CD8-positive, alpha-beta T cell (primary cell): ENCODE measurements at regions of chr7 and their contacts with region 1.

Region 1: DNA sequence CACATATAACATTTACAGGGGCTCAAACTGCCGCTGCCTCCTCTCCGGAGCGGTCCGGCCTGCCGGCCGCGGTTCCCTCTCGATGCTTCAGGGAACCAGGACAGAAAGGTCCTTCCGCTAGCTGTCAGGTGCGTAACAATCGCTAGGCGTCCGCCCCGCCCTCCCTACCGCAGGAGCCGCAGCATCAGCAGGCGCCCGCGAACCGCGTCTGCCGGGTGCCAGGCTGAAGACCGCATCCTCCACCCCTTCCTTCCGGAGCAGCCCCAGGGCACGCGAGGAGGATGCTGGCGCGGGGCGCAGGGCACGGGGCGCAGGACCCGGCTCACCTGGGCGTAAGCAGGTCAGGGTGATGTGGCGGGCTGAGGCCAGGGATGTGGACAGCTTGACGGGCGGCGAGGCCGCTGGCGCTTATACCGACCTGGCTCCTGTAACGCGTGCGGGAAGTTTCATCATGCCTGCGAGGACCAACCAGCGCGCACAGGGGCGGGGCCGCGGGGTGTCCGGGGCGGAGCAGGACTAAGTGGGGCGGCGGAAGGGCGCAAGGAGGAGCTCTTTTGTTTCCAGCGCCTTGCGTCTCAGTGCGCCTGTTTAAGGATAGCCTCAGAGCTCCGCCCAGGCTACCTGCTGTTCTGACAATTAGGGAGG is at the start of gene ASNS:
- DNase-seq: peak; percentile 62 to 91 (median 78)
- ATAC-seq: peak; percentile 80
- H3K4me3 ChIP-seq: peak within 1 kb of the TSS; percentile 55 to 64
- H3K4me3 Mint-ChIP-seq: peak within 1 kb of the TSS; percentile 87
- H3K27ac ChIP-seq: peak within 1 kb of the TSS; percentile 58 to 75
- H3K27ac Mint-ChIP-seq: peak within 1 kb of the TSS; percentile 91
- H3K4me1 ChIP-seq: peaks cover 12% of the 10 kb centered on the region
- H3K4me1 Mint-ChIP-seq: peaks cover 13% of the 10 kb centered on the region
- H3K27me3 ChIP-seq: no peaks in the 10 kb centered on the region
- H3K27me3 Mint-ChIP-seq: no peaks in the 10 kb centered on the region
- CTCF ChIP-seq: no peak
- total RNA-seq, gene ASNS: 11.1 to 13.6 TPM

Region 2: DNA sequence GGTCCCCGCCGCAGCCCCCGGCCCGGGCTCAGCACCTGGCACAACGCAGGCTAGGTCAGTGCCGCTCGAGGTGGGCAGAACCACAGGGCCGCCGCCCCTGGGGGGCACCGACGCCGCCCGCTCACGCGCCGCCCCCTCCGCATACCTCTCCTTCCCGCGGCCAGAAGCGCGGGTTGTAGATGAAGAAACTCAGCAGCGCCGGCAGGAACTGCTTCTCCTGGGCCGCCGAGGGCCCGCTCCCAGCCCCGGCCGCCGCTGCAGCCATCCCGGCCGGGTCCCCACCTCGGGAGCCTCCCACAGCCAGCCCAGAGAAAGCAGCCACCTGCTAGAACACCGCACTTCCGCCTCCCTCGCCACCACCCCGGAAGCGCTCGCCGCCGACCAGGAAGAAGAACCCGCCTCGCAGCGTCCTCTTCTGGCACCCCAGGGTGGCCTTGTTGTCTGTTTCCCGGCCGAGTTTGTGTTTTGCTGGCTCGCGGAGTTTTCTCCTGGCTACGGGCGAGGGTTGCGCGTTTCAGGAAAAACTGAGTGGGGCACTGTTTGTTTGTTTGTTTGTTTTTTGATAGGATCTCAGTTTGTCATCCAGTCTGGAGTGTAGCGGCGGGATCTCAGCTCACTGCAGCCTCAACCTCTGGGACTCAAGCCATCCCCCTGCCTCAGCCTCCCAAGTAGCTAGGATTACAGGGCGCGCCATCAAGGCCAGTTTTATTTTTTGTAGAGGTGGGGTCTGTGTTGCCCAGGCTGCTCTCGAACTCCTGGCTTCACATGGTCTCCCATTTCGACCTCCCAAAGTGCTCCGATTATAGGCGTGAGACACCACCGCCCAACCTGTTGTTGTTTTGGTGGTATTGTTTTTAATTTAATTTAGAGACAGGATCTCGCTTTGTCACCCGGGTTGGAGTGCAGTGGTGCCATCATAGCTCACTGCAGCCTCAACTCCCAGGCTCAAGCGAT is 100.1 kb after region 1 on chr7:
- CTCF ChIA-PET with region 1: no interaction called
- POLR2A ChIA-PET with region 1: interaction called, 3 read pairs
- intact Hi-C with region 1: loop called in 1 of 2 experiments (anchors 2 kb)
- DNase-seq: peak; percentile 65 to 90 (median 84)
- ATAC-seq: peak; percentile 94
- H3K4me3 ChIP-seq: peak overlapping the region; percentile 81 to 84
- H3K4me3 Mint-ChIP-seq: peak overlapping the region; percentile 89
- H3K27ac ChIP-seq: peak overlapping the region; percentile 61 to 72
- H3K27ac Mint-ChIP-seq: peak overlapping the region; percentile 93
- H3K4me1 ChIP-seq: peaks cover 10% of the 10 kb centered on the region
- H3K4me1 Mint-ChIP-seq: peaks cover 22% of the 10 kb centered on the region
- H3K27me3 ChIP-seq: no peaks in the 10 kb centered on the region
- H3K27me3 Mint-ChIP-seq: no peaks in the 10 kb centered on the region
- CTCF ChIP-seq: peak; percentile 32

Region 3: GRCh38 chr7:98202367-98203195 is 330.4 kb after region 1 on chr7:
- CTCF ChIA-PET with region 1: no interaction called
- POLR2A ChIA-PET with region 1: no interaction called
- intact Hi-C with region 1: loop called in 1 of 2 experiments (anchors 1 kb)
- DNase-seq: peak; percentile 44 to 86 (median 73)
- ATAC-seq: peak; percentile 85
- H3K4me3 ChIP-seq: peak overlapping the region; percentile 30 to 43
- H3K4me3 Mint-ChIP-seq: peak overlapping the region; percentile 85
- H3K27ac ChIP-seq: peak overlapping the region; percentile 50
- H3K27ac Mint-ChIP-seq: peak overlapping the region; percentile 93
- H3K4me1 ChIP-seq: peaks cover 58% of the 10 kb centered on the region
- H3K4me1 Mint-ChIP-seq: peaks cover 60% of the 10 kb centered on the region
- H3K27me3 ChIP-seq: no peaks in the 10 kb centered on the region
- H3K27me3 Mint-ChIP-seq: no peaks in the 10 kb centered on the region
- CTCF ChIP-seq: no peak